Ascending aorta (tissue), 2 donors: ENCODE measurements at regions of chr14 and their contacts with region 1.

Region 1: GRCh38 chr14:100375963-100376735 is 53.0 kb downstream of the SLC25A47 start:
- DNase-seq: peak; percentile 81 to 97
- H3K4me3 ChIP-seq: peak within 1 kb of the TSS; percentile 64 to 76
- H3K27ac ChIP-seq: peak within 1 kb of the TSS; percentile 87 to 97
- H3K4me1 ChIP-seq: peaks cover 3 to 11% of the 10 kb centered on the region in 2 donors
- H3K27me3 ChIP-seq: no peaks in the 10 kb centered on the region
- CTCF ChIP-seq: no peak

Region 2: GRCh38 chr14:99480917-99481744 is 895.0 kb before region 1 on chr14 and contains the start of gene CCNK:
- intact Hi-C with region 1: loop called (anchors 10 kb)
- DNase-seq: peak; percentile 100
- H3K4me3 ChIP-seq: peak within 1 kb of the TSS; percentile 87 to 95
- H3K27ac ChIP-seq: peak within 1 kb of the TSS; percentile 96 to 98
- H3K4me1 ChIP-seq: peaks cover 6 to 34% of the 10 kb centered on the region in 2 donors
- H3K27me3 ChIP-seq: no peaks in the 10 kb centered on the region
- CTCF ChIP-seq: no peak
- total RNA-seq, gene CCNK: 21.9 TPM

Region 3: DNA sequence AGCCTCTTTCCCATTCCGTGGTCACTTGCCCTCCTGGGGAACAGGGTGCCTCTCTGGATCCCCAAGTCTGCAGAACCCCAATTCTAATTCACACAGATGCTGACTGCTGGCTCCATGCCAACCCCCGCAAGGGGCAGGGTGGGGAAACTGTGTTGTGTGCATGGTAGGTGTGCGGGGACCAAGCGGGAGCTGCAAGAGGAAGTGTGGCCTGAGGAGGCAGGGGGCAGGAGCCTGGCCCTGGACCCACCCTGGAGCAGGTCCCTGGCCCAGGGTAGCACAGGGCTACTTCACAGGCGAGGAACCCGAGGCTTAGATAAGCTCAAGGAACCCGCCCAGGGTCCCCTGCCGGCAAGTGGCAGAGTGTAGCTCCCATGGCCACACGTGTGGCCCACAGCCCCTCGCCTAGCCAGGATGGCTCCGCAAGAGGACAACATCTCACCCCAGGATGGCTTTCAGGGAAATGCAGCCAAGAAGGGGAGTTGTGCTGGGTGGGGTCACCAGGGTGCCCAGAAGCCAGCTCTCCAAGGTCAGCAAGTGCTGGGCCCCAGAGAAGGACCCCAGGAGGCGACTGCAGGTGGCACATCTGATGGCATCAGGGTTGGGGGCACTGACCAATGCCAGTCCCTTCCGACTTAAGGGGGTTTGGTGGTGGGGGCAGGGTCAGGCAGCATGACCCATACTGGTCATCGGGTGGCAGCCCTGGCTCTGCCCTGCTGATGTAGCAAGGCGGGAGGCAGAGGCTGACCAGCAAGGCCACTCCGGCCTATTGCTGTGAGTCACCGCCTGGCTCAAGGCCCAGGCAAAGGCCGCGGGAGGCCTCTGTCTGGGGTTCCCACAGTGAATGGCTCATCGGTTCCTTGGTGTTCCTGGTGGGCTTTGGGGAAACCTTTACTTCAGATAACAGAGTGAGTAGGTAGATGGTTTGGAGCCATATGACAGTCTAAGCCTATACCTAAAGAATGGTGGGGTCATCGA is 620.2 kb before region 1 on chr14:
- intact Hi-C with region 1: loop called (anchors 10 kb)
- DNase-seq: peak; percentile 78 to 97
- H3K4me3 ChIP-seq: no peak overlapping the region
- H3K27ac ChIP-seq: peak overlapping the region; percentile 22 to 48
- H3K4me1 ChIP-seq: peaks cover 16 to 47% of the 10 kb centered on the region in 2 donors
- H3K27me3 ChIP-seq: no peaks in the 10 kb centered on the region
- CTCF ChIP-seq: no peak

Region 4: DNA sequence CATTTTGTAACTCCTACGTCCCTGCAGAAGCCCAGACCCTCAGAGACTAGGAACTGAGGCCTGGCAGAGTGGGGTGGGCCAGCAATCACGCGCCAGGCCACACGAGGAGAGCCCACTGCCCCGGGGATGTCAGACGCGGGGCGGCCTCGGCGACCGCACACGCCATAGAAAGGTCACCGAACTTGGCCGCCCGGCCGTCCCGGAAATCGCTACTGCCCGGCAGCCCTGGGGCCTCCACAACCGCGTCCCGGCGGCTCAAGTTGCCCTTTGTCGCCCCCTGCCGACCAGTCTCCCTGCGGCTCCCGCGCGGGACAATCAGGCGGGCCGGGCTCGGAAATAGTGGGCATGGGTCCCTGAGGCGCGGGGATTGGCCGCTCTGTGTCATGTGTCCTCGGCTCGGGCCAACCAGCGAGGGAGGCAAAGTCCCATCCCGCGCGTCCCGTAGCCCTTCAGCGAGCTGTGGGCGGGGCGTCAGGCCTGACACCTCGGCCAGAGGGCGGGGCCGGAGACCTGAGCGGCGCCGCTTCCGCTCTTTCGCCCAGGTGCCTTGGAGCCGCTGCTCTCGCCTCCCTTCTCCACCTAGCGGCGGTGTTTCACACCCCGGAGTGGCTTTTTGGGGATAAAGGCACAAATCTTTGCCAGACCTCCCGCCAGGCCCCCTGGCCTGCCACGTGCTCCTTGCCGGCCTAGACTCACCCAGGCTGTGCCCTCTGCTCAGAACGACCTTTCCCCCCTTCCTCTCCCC is 183.3 kb before region 1 on chr14:
- intact Hi-C with region 1: loop called (anchors 2 kb)
- DNase-seq: peak; percentile 97 to 100
- H3K4me3 ChIP-seq: peak overlapping the region; percentile 54 to 68
- H3K27ac ChIP-seq: peak overlapping the region; percentile 84 to 94
- H3K4me1 ChIP-seq: peaks cover 0 to 9% of the 10 kb centered on the region in 2 donors
- H3K27me3 ChIP-seq: no peaks in the 10 kb centered on the region
- CTCF ChIP-seq: peak; percentile 79 to 90 (median 81)

Region 5: GRCh38 chr14:100285021-100285912 is 90.9 kb before region 1 on chr14:
- intact Hi-C with region 1: loop called (anchors 1 kb)
- DNase-seq: peak in 1 of 2 donors; percentile 80
- H3K4me3 ChIP-seq: peak overlapping the region; percentile 82 to 93
- H3K27ac ChIP-seq: peak overlapping the region; percentile 85 to 86
- H3K4me1 ChIP-seq: peaks cover 0 to 5% of the 10 kb centered on the region in 2 donors
- H3K27me3 ChIP-seq: no peaks in the 10 kb centered on the region
- CTCF ChIP-seq: peak; percentile 86 to 92 (median 91)

Region 6: GRCh38 chr14:100547633-100548294 is 171.6 kb after region 1 on chr14:
- intact Hi-C with region 1: loop called (anchors 5 kb)
- DNase-seq: peak in 1 of 2 donors; percentile 76
- H3K4me3 ChIP-seq: no peak overlapping the region
- H3K27ac ChIP-seq: peak overlapping the region in 1 of 2 donors; percentile 33
- H3K4me1 ChIP-seq: peaks cover 0 to 8% of the 10 kb centered on the region in 2 donors
- H3K27me3 ChIP-seq: no peaks in the 10 kb centered on the region
- CTCF ChIP-seq: no peak

Region 7: GRCh38 chr14:101964297-101965144 is 1588.4 kb after region 1 on chr14 and contains the start of gene DYNC1H1:
- intact Hi-C with region 1: loop called (anchors 5 kb)
- DNase-seq: peak; percentile 77 to 96
- H3K4me3 ChIP-seq: peak within 1 kb of the TSS; percentile 100
- H3K27ac ChIP-seq: peak within 1 kb of the TSS; percentile 93 to 95
- H3K4me1 ChIP-seq: peaks cover 2 to 6% of the 10 kb centered on the region in 2 donors
- H3K27me3 ChIP-seq: no peaks in the 10 kb centered on the region
- CTCF ChIP-seq: no peak
- total RNA-seq, gene DYNC1H1: 577 TPM